ENCODE measurements at regions of chr19 and their contacts with region 1.

Region 1: GRCh38 chr19:33373701-33374421 is at the start of gene CEBPG:
- DNase-seq: peak; percentile 65 to 83
- ATAC-seq: peak; percentile 48 to 59 (median 55)
- H3K4me3 ChIP-seq: peak within 1 kb of the TSS; percentile 86
- H3K4me3 Mint-ChIP-seq: peak within 1 kb of the TSS; percentile 88
- H3K27ac ChIP-seq: peak within 1 kb of the TSS; percentile 92
- H3K27ac Mint-ChIP-seq: peak within 1 kb of the TSS; percentile 86 to 97
- H3K4me1 ChIP-seq: peaks cover 25% of the 10 kb centered on the region
- H3K4me1 Mint-ChIP-seq: peaks cover 45 to 48% of the 10 kb centered on the region in 2 donors
- H3K27me3 ChIP-seq: no peaks in the 10 kb centered on the region
- H3K27me3 Mint-ChIP-seq: no peaks in the 10 kb centered on the region
- CTCF ChIP-seq: no peak
- total RNA-seq, gene CEBPG: 22.3 to 28.1 (median 23.9) TPM

Region 2: DNA sequence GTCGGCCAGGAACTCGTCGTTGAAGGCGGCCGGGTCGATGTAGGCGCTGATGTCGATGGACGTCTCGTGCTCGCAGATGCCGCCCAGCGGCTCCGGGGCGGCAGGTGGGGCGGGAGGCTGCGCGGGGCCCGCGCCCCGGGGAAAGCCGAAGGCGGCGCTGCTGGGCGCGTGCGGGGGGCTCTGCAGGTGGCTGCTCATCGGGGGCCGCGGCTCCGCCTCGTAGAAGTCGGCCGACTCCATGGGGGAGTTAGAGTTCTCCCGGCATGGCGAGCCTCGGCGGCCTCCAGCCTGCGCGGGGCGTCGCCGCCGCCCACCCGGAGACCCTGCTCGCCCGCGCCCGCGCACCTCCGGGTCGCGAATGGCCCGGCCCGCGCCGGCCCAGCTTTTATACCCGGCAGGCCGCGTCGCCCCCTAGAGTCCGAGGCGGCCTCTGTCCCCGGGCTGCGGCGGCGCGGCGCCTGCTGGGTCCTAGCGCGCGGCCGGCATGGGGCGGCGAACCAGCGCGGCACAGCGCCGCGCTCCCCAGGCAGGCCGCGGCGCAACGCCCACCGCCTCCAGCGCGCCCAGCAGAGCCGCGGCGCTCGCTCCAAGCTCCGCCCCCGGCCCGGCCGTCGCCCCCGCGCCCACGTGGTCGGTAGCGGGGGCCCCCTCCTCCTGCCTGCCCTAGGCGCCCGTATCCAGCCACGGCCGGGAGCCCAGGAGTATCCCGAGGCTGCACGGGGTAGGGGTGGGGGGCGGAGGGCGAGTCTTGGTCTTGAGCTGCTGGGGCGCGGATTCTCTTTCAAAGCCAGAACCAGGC is 71.5 kb before region 1 on chr19 and contains the start of gene CEBPA:
- intact Hi-C with region 1: loop called (anchors 2 kb)
- DNase-seq: peak; percentile 74 to 81
- ATAC-seq: peak; percentile 90 to 94 (median 92)
- H3K4me3 ChIP-seq: peak within 1 kb of the TSS; percentile 57
- H3K4me3 Mint-ChIP-seq: peak within 1 kb of the TSS; percentile 84
- H3K27ac ChIP-seq: no peak within 1 kb of the TSS
- H3K27ac Mint-ChIP-seq: peak within 1 kb of the TSS in 1 of 2 donors; percentile 36
- H3K4me1 ChIP-seq: peaks cover 28% of the 10 kb centered on the region
- H3K4me1 Mint-ChIP-seq: peaks cover 8 to 20% of the 10 kb centered on the region in 2 donors
- H3K27me3 ChIP-seq: peaks cover 20% of the 10 kb centered on the region
- H3K27me3 Mint-ChIP-seq: peaks cover 0 to 17% of the 10 kb centered on the region in 2 donors
- CTCF ChIP-seq: peak; percentile 54
- total RNA-seq, gene CEBPA: 7.6 to 19.5 (median 8.2) TPM

Region 3: GRCh38 chr19:33472691-33473652 is 99.1 kb after region 1 on chr19:
- intact Hi-C with region 1: no loop called
- DNase-seq: no peak
- ATAC-seq: no peak
- H3K4me3 ChIP-seq: no peak overlapping the region
- H3K4me3 Mint-ChIP-seq: no peak overlapping the region
- H3K27ac ChIP-seq: no peak overlapping the region
- H3K27ac Mint-ChIP-seq: no peak overlapping the region
- H3K4me1 ChIP-seq: no peaks in the 10 kb centered on the region
- H3K4me1 Mint-ChIP-seq: peaks cover 8 to 9% of the 10 kb centered on the region in 2 donors
- H3K27me3 ChIP-seq: no peaks in the 10 kb centered on the region
- H3K27me3 Mint-ChIP-seq: no peaks in the 10 kb centered on the region
- CTCF ChIP-seq: no peak

Measured in natural killer cell (primary cell).